ENCODE measurements at regions of chr18 and their contacts with region 1.

Region 1: GRCh38 chr18:46173393-46174341 is 69.5 kb downstream of the HAUS1 start:
- DNase-seq: peak; percentile 97
- H3K4me3 ChIP-seq: peak overlapping the region; percentile 94 to 100 (median 97)
- H3K27ac ChIP-seq: peak overlapping the region; percentile 88 to 93 (median 92)
- H3K4me1 ChIP-seq: peaks cover 29 to 43% (median 37%) of the 10 kb centered on the region in 4 donors
- H3K27me3 ChIP-seq: no peaks in the 10 kb centered on the region
- CTCF ChIP-seq: peak; percentile 70 to 75 (median 73)
- EP300 ChIP-seq: no peak
- POLR2A ChIP-seq: peak; percentile 49

Region 2: GRCh38 chr18:46226461-46226860 is 52.8 kb after region 1 on chr18:
- intact Hi-C with region 1: no loop called
- DNase-seq: no peak
- H3K4me3 ChIP-seq: no peak overlapping the region
- H3K27ac ChIP-seq: no peak overlapping the region
- H3K4me1 ChIP-seq: peaks cover 0 to 30% (median 8%) of the 10 kb centered on the region in 4 donors
- H3K27me3 ChIP-seq: no peaks in the 10 kb centered on the region
- CTCF ChIP-seq: no peak
- EP300 ChIP-seq: no peak
- POLR2A ChIP-seq: no peak

Region 3: DNA sequence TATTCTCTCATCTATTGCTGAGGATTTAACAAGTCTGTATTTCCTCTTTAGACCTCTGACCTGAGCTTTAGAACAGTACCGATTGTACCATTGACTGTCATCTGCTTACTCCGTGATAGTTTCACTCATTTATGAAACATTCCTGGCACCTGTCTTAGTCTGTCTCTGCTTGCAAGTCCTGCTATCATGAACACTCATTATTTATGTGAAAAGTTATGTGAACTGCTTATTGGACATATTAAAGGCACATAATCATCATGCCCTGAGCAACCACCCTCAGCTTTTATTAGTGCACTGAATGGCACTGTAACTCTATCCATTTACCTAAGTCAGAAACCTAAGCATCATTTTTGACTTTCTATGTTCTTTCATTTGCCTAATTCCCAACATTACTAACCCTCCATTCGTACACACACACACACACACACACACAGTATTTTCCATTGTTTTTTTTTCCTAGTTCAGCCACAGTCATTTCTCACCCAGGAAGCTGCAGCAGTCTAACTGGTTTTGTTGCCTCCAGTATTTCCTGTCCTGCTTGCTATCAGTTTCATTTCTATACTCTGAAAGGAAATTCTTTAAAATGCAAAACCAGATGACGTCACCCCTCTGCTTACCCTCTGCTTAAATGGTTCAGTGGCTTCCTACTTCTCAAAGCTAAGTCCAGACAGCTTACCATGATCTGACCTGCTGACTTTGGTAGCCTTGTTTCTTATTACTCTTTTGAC is 76.6 kb after region 1 on chr18:
- intact Hi-C with region 1: loop called (anchors 5 kb)
- DNase-seq: no peak
- H3K4me3 ChIP-seq: no peak overlapping the region
- H3K27ac ChIP-seq: no peak overlapping the region
- H3K4me1 ChIP-seq: peaks cover 15 to 37% (median 33%) of the 10 kb centered on the region in 4 donors
- H3K27me3 ChIP-seq: no peaks in the 10 kb centered on the region
- CTCF ChIP-seq: no peak
- EP300 ChIP-seq: no peak
- POLR2A ChIP-seq: no peak

Region 4: DNA sequence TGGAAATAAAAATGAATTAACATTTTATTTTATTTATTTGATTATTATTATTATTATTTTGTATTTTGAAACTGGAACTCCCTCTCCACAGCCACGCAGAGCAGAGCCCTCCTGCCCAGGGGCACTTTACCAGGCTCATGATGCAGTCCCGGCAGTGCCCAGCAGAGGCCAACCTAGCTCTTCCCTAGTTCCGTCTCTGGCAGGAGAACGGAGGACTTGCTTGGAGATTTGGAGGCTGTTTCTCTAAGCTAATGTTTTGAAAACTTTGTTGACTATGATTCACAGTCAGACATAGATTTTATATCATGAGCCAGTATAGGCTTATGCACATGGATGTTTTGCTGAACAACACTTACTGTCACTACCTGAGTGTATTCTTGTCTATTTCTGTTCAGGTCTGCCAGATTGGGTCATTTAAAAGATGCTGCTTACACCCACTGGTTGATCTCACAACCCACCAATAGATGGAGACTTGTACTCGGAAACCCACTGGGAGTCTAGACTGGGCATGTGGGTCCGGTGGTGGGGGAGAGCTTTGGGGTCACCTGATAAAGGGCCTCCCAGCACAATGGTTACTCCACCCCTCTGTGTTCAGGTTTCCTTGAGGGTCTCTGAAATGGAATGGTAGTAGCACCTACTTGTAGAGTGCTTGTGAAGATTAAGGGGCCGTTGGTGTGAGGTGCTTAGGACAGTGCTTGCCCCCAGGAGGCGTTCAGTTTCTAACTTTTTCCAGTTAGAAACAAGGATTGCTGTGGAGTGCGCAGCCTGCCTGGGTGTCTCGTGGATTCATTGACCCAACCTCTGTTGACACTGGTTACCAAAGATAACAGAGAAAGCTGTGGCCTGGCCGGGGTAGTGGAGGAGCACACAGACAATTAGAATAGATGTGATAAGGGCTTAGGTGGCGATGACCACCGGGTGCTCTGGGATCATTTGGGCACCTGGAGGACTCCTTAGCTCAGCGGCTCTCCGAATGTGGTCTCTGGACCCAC is 107.8 kb after region 1 on chr18:
- intact Hi-C with region 1: loop called (anchors 5 kb)
- DNase-seq: no peak
- H3K4me3 ChIP-seq: no peak overlapping the region
- H3K27ac ChIP-seq: no peak overlapping the region
- H3K4me1 ChIP-seq: peaks cover 6 to 9% (median 7%) of the 10 kb centered on the region in 4 donors
- H3K27me3 ChIP-seq: no peaks in the 10 kb centered on the region
- CTCF ChIP-seq: peak; percentile 84 to 91 (median 88)
- EP300 ChIP-seq: no peak
- POLR2A ChIP-seq: no peak

Region 5: DNA sequence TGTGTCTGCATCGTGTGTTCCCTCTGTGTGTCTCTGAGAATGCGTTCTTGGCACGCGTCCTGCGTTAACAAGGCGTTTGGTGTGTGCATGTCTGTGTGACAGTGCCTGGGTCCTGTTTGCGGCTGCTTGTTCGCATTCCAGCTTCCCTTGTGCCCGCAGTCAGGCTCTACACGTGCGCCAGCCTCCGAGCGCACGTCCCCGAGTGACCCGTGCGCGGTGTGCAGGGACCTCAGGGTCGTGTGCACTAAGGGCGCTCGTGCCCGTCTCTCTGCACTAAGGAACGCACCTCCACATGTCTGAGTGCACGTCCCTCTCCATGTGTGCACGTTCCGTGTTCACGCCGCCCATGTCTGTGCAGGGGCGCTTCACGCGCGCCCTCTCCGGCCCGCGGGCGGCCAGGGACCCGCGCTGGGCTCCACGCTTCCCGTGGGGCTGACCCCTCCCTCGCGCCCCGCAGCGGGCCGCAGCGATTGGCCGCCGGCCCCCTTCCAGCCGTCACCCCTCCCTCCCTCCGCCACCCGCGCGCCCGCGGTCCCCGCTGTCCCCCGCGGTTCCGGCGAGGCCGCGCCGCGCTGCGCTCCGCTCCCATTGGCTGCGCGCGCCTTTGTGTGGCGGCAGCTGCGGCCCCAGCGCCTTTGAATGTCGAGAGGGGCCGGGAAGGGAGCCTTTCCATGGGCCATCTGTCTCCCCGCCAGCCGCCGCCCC is 159.9 kb after region 1 on chr18:
- intact Hi-C with region 1: loop called (anchors 10 kb)
- DNase-seq: no peak
- H3K4me3 ChIP-seq: peak overlapping the region; percentile 64 to 72 (median 68)
- H3K27ac ChIP-seq: peak overlapping the region in 1 of 4 donors; percentile 44
- H3K4me1 ChIP-seq: peaks cover 19 to 46% (median 41%) of the 10 kb centered on the region in 4 donors
- H3K27me3 ChIP-seq: peaks cover 0 to 12% (median 0%) of the 10 kb centered on the region in 4 donors
- CTCF ChIP-seq: no peak
- EP300 ChIP-seq: no peak
- POLR2A ChIP-seq: no peak

Region 6: GRCh38 chr18:46481048-46481846 is 307.6 kb after region 1 on chr18:
- intact Hi-C with region 1: loop called (anchors 10 kb)
- DNase-seq: no peak
- H3K4me3 ChIP-seq: no peak overlapping the region
- H3K27ac ChIP-seq: no peak overlapping the region
- H3K4me1 ChIP-seq: peaks cover 0 to 13% (median 13%) of the 10 kb centered on the region in 4 donors
- H3K27me3 ChIP-seq: no peaks in the 10 kb centered on the region
- CTCF ChIP-seq: peak; percentile 63 to 80 (median 72)
- EP300 ChIP-seq: no peak
- POLR2A ChIP-seq: no peak

Region 7: GRCh38 chr18:46660955-46661749 is 487.5 kb after region 1 on chr18:
- intact Hi-C with region 1: loop called (anchors 1 kb)
- DNase-seq: no peak
- H3K4me3 ChIP-seq: no peak overlapping the region
- H3K27ac ChIP-seq: no peak overlapping the region
- H3K4me1 ChIP-seq: peaks cover 0 to 2% (median 0%) of the 10 kb centered on the region in 4 donors
- H3K27me3 ChIP-seq: no peaks in the 10 kb centered on the region
- CTCF ChIP-seq: no peak
- EP300 ChIP-seq: no peak
- POLR2A ChIP-seq: no peak

Measured in esophagus muscularis mucosa (tissue), 4 donors.